ENCODE measurements at regions of chr19 and their contacts with region 1.

Region 1: GRCh38 chr19:5987077-5987818 is 9.3 kb upstream of the RANBP3 start:
- DNase-seq: no peak
- H3K4me3 ChIP-seq: peak overlapping the region; percentile 40 to 58 (median 47)
- H3K27ac ChIP-seq: peak overlapping the region in 2 of 4 donors; percentile 40 to 52
- H3K4me1 ChIP-seq: peaks cover 9 to 27% (median 16%) of the 10 kb centered on the region in 4 donors
- H3K27me3 ChIP-seq: no peaks in the 10 kb centered on the region
- CTCF ChIP-seq: peak in 2 of 3 experiments; percentile 95 to 96
- EP300 ChIP-seq: no peak
- POLR2A ChIP-seq: no peak

Region 2: GRCh38 chr19:5891938-5892771 is 95.1 kb before region 1 on chr19:
- intact Hi-C with region 1: no loop called
- DNase-seq: no peak
- H3K4me3 ChIP-seq: no peak overlapping the region
- H3K27ac ChIP-seq: peak overlapping the region in 2 of 4 donors; percentile 10 to 79
- H3K4me1 ChIP-seq: peaks cover 24 to 45% (median 38%) of the 10 kb centered on the region in 4 donors
- H3K27me3 ChIP-seq: peaks cover 0 to 4% (median 0%) of the 10 kb centered on the region in 4 donors
- CTCF ChIP-seq: peak; percentile 79 to 87 (median 85)
- EP300 ChIP-seq: no peak
- POLR2A ChIP-seq: no peak

Region 3: DNA sequence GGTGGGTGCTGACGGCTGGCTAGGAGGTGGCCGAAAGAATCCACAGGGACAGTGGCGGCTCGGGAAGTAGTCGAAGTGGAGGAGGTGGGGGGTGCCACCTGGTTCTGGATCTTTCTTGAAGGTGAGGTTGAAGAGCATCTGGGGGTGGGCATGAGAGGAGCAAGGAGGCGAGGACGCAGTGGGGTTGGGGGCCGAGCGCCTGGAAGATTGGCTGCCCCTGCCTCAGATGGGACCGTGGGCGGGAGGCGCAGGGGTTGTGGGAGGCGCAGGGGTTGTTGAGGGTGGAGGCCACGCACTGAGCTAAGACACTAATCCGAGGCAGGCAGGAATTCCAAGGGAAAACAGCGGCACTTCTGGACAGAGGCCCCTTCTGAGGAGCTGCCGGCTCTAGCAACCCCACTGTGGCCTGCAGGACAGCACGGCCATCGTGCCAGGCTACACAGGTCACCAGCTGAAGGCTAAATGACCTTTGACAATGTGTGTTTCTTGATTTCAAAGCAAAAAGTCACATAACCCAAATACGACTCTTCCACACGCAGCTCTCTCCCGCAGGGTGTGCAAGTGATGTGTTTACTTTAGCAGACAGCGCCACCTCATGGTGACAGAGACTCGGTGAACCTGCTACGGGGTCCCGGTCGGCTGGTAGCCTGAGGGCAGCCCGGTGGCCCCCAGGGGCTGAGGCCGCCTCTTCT is 34.8 kb after region 1 on chr19:
- intact Hi-C with region 1: loop called (anchors 2 kb)
- DNase-seq: peak; percentile 94
- H3K4me3 ChIP-seq: no peak overlapping the region
- H3K27ac ChIP-seq: peak overlapping the region; percentile 58 to 72 (median 68)
- H3K4me1 ChIP-seq: peaks cover 4 to 31% (median 21%) of the 10 kb centered on the region in 4 donors
- H3K27me3 ChIP-seq: no peaks in the 10 kb centered on the region
- CTCF ChIP-seq: peak; percentile 69 to 73 (median 70)
- EP300 ChIP-seq: no peak
- POLR2A ChIP-seq: no peak

Region 4: DNA sequence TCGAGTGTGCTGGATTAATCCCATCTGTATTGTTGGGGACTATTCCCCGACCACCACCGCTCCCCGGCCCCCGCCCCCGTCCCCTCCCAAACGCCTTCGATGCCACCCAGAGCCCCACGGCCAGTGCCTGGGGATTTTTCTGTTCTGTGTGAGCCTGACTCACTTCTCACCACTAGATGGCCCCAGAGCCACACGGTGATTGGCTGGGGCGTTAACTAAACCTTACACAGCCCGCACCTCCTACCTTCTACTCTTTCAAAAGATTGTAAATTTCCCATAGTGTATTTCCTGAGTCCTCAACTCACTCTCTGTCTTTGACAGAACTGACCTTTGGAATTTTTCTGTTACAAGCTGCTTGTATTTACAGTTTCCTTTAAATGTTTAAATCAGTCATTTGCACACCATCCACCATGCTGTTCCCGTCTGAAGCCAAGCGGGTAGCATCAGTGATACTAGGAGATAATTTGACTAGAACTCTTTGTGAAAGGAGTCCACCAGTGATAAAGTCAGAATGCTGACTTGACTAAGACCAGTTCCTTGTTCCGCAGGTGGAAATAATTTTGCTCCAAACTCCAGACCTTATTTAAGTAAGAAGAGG is 61.7 kb after region 1 on chr19:
- intact Hi-C with region 1: no loop called
- DNase-seq: peak; percentile 93
- H3K4me3 ChIP-seq: peak overlapping the region; percentile 18 to 33 (median 20)
- H3K27ac ChIP-seq: peak overlapping the region; percentile 69 to 92 (median 77)
- H3K4me1 ChIP-seq: peaks cover 16 to 56% (median 41%) of the 10 kb centered on the region in 4 donors
- H3K27me3 ChIP-seq: no peaks in the 10 kb centered on the region
- CTCF ChIP-seq: peak; percentile 87 to 90 (median 89)
- EP300 ChIP-seq: no peak
- POLR2A ChIP-seq: no peak

Region 5: GRCh38 chr19:6125571-6125989 is 138.3 kb after region 1 on chr19:
- intact Hi-C with region 1: loop called (anchors 5 kb)
- DNase-seq: no peak
- H3K4me3 ChIP-seq: no peak overlapping the region
- H3K27ac ChIP-seq: no peak overlapping the region
- H3K4me1 ChIP-seq: no peaks in the 10 kb centered on the region
- H3K27me3 ChIP-seq: no peaks in the 10 kb centered on the region
- CTCF ChIP-seq: peak; percentile 95 to 98 (median 97)
- EP300 ChIP-seq: no peak
- POLR2A ChIP-seq: no peak

Measured in esophagus muscularis mucosa (tissue), 4 donors.